Psoas muscle (tissue), 8 donors: ENCODE measurements at regions of chr6 and their contacts with region 1.

Region 1: DNA sequence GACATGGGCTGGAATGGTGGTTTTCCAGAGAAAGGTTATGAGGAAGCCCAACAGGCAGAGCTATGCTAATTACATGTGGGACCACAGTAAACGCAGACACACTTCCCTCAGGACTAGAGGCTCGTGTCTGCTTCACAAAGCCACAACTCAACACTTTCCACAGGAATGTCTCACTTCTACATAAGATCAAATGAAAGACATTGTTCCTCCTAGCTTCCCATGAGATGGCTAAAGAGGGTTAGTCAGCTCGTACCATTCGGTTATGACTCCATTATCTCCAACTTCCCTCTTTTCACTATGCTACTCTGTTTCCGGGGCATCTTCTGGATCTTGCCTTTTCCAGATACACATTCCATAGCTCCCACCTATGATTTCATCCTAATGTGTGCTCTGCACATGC is 29.1 kb upstream of the ZC3H12D start:
- DNase-seq: no peak
- ATAC-seq: no peak
- H3K4me3 ChIP-seq: no peak overlapping the region
- H3K27ac ChIP-seq: no peak overlapping the region
- H3K4me1 ChIP-seq: no peaks in the 10 kb centered on the region
- H3K27me3 ChIP-seq: no peaks in the 10 kb centered on the region
- CTCF ChIP-seq: no peak

Region 2: DNA sequence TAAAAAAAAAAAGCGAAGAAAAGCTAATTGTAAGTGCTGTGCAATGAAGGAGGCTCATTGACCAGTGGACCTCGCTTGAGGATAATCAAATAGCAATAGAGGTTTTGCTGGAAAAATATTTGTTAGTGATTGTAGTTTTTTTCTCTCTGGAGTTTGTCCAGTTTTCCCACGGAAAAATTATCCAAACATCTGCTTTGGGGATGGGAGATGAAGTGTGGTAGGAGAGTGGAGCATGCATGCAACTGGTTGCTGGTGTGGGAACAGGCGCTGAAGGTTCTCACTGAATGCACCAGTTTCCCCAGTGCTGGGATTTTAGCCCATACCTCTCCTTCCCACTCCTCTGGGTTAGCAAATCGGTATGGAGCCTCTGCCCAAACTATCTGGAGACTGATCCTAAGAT is 478.1 kb before region 1 on chr6:
- intact Hi-C with region 1: loop called in 1 of 2 experiments (anchors 2 kb)
- DNase-seq: no peak
- ATAC-seq: no peak
- H3K4me3 ChIP-seq: no peak overlapping the region
- H3K27ac ChIP-seq: no peak overlapping the region
- H3K4me1 ChIP-seq: no peaks in the 10 kb centered on the region
- H3K27me3 ChIP-seq: no peaks in the 10 kb centered on the region
- CTCF ChIP-seq: no peak

Region 3: DNA sequence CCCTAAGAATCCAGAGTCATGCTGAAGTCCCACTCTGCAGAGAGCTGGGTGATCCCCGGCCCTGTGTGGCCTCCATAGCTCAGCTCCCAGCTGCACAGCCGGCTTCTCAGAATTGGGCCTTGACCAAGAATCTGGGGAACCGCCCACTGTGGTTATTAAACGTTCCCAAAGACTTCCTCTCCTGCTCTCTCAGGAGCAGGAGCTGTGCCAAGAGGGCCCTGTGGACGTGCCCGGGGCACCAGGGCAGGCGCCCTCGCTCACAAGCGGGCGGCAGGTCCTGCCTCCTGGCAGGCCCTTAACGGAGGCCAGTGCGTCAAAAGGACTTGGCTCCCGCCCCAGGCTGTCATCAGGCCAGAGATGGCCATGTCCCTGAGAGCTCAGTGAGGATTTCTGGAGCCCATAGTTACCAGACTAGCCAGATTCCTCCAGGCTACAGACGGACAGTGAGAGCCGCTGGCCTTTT is 59.5 kb before region 1 on chr6:
- intact Hi-C with region 1: loop called in 1 of 2 experiments (anchors 1 kb)
- DNase-seq: peak; percentile 96 to 97
- ATAC-seq: peak; percentile 93 to 97 (median 94)
- H3K4me3 ChIP-seq: peak overlapping the region; percentile 30
- H3K27ac ChIP-seq: peak overlapping the region; percentile 70
- H3K4me1 ChIP-seq: peaks cover 22% of the 10 kb centered on the region
- H3K27me3 ChIP-seq: peaks cover 0 to 9% (median 1%) of the 10 kb centered on the region in 3 donors
- CTCF ChIP-seq: no peak

Region 4: GRCh38 chr6:149565527-149566409 is 51.9 kb after region 1 on chr6 and contains the start of gene GINM1:
- intact Hi-C with region 1: no loop called
- DNase-seq: peak; percentile 93 to 97
- ATAC-seq: peak; percentile 94 to 95 (median 94)
- H3K4me3 ChIP-seq: peak within 1 kb of the TSS; percentile 97
- H3K27ac ChIP-seq: peak within 1 kb of the TSS; percentile 96
- H3K4me1 ChIP-seq: peaks cover 17% of the 10 kb centered on the region
- H3K27me3 ChIP-seq: no peaks in the 10 kb centered on the region
- CTCF ChIP-seq: peak; percentile 68
- total RNA-seq, gene GINM1: 26.8 to 39.0 (median 30.5) TPM